ENCODE measurements at regions of chr1 and their contacts with region 1.

Region 1: GRCh38 chr1:212455803-212456528 is 23.2 kb downstream of the NENF start:
- DNase-seq: peak; percentile 83
- H3K4me3 ChIP-seq: no peak overlapping the region; a peak in 1 of 4 replicates
- H3K27ac ChIP-seq: no peak overlapping the region
- H3K4me1 ChIP-seq: peaks cover 0 to 14% of the 10 kb centered on the region in 2 experiments; a peak in 1 of 4 replicates
- H3K27me3 ChIP-seq: no peaks in the 10 kb centered on the region
- CTCF ChIP-seq: peak; percentile 97
- EP300 ChIP-seq: no peak
- RAD21 ChIP-seq: peak; percentile 98

Region 2: GRCh38 chr1:211680752-211681327 is 775.1 kb before region 1 on chr1:
- CTCF ChIA-PET with region 1: interaction called, 18 read pairs
- POLR2A ChIA-PET with region 1: no interaction called
- DNase-seq: peak; percentile 83
- H3K4me3 ChIP-seq: no peak overlapping the region
- H3K27ac ChIP-seq: peak overlapping the region in 1 of 2 experiments; percentile 36; a peak in 1 of 4 replicates
- H3K4me1 ChIP-seq: peaks cover 0 to 2% of the 10 kb centered on the region in 2 experiments; a peak in 3 of 4 replicates
- H3K27me3 ChIP-seq: no peaks in the 10 kb centered on the region
- CTCF ChIP-seq: peak; percentile 74
- EP300 ChIP-seq: no peak
- RAD21 ChIP-seq: peak; percentile 95

Region 3: DNA sequence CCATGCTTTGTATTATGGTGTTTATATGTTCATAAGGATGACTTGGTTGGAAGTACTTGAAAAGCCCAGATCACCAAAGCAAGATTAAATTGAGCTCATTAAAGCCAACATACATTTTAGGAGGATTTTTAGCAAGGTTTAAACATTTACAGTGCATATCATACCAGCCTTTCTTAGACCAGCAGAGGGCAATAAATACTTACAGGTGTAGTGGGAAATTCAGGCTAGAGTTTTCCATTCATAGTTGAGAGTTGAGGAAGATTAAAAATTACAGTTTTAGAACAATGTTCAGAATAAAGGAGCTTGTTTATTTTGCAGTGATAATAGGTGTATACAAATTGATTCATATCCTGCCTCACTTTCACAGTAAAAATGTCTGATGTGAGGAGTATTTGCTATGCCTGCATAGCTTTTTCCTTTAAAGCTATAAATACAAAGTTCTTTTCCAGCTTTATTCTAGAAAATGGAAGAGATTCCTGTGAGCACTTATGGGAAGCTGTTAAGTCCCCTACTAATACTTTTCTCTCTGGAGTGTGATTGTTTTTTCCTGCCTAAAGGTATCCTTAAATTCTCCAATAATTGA is 385.2 kb before region 1 on chr1:
- CTCF ChIA-PET with region 1: interaction called, 187 read pairs
- POLR2A ChIA-PET with region 1: no interaction called
- DNase-seq: peak; percentile 15
- H3K4me3 ChIP-seq: no peak overlapping the region; a peak in 1 of 4 replicates
- H3K27ac ChIP-seq: no peak overlapping the region
- H3K4me1 ChIP-seq: no peaks in the 10 kb centered on the region
- H3K27me3 ChIP-seq: no peaks in the 10 kb centered on the region
- CTCF ChIP-seq: peak; percentile 85
- EP300 ChIP-seq: no peak
- RAD21 ChIP-seq: peak; percentile 89

Region 4: DNA sequence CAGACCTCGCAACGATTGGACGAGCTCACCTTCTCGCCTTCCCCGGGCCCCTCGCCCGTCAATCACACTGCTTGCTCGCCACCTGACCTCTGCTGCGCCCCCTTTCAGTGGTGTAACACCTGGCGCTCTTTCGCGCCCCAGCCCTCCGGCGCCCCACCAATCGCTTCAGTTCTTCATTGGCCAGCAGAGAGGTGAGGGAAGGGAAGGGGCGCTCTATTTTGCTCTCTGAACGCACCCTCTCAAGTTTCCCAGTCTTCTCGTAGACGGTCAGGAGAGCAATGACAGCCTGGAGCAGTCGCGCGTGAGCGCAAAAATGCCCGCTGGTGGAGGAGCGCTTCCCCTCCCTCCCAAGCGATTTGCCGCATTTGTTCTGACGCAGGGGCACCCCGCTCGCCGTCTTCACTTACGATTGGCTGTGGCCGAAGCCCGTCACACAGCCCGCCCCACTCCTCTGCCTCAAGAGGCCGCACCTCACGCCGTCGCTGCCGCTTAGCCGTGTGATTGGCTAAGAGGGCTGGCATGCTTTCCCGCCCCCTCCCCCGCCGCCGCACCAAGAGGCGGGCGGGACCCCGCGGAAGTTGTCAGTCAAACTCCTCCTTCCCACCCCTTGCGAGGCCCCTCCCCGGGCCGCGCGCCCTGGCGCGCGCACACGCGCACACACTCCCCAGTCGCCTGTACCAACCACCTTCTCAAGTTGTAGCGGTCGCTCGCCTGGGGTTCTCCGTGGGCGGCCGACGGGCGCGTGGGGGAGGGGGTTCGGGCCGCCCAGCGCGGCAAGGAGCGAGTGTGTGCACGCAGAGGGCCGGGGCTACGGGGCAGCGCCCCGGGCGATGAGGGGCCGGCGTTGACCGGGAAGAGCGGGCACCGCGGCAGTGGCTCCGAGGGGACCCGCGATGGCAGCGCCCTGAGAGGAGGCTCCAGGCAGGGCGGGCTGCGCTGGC is 171.0 kb before region 1 on chr1 and contains the start of gene PPP2R5A:
- CTCF ChIA-PET with region 1: interaction called, 24 read pairs
- POLR2A ChIA-PET with region 1: no interaction called
- DNase-seq: peak; percentile 98
- H3K4me3 ChIP-seq: peak within 1 kb of the TSS; percentile 96
- H3K27ac ChIP-seq: peak within 1 kb of the TSS; percentile 77 to 89
- H3K4me1 ChIP-seq: peaks cover 12 to 18% of the 10 kb centered on the region in 2 experiments; a peak in 3 of 4 replicates
- H3K27me3 ChIP-seq: no peaks in the 10 kb centered on the region
- CTCF ChIP-seq: peak; percentile 46
- EP300 ChIP-seq: peak in 1 of 2 experiments; percentile 40; a peak in 1 of 4 replicates
- RAD21 ChIP-seq: no peak
- polyA plus RNA-seq, gene PPP2R5A: 5.4 and 6.1 TPM in 2 replicates

Region 5: GRCh38 chr1:212368073-212368484 is 87.9 kb before region 1 on chr1:
- CTCF ChIA-PET with region 1: interaction called, 14 read pairs
- POLR2A ChIA-PET with region 1: no interaction called
- DNase-seq: peak; percentile 60
- H3K4me3 ChIP-seq: no peak overlapping the region
- H3K27ac ChIP-seq: no peak overlapping the region
- H3K4me1 ChIP-seq: no peaks in the 10 kb centered on the region
- H3K27me3 ChIP-seq: no peaks in the 10 kb centered on the region
- CTCF ChIP-seq: peak; percentile 87
- EP300 ChIP-seq: no peak
- RAD21 ChIP-seq: peak; percentile 82

Region 6: DNA sequence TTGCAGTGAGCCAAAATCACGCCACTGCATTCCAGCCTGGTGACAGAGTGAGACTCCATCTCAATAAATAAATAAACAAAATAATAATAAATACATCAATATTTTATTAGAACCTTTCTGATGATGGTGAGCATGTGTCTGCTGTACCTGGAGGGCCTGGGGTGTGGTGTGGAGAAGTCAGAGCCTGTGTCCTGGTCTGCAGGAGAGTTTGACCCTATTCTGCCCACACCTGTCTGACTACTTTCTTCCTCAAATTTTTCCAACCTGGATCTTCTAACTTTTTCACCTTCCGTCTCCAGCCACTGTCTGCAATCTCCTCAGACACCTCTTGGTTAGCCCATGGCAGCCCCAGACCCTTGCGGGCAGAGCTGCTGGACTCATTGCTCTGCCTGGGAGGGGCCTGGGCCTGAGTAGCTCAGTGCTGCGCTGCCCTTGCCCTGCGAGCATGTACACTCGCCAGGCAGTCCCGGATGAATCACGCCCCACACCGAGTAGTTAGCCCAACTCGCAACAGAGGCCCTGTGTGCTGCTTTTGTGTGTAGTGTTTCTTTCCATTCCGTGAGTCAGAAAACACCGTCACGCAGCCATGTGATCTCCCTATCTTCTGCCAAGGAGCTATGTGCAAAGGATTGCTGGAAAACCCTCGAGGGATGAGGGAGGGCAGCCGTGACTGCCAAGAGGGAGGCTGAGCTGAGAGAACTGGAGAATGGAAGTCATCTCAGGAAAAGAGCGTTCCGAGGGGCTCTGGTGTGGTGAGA is 13.9 kb after region 1 on chr1:
- CTCF ChIA-PET with region 1: interaction called, 72 read pairs
- POLR2A ChIA-PET with region 1: no interaction called
- DNase-seq: no peak
- H3K4me3 ChIP-seq: no peak overlapping the region
- H3K27ac ChIP-seq: peak overlapping the region in 1 of 2 experiments; percentile 44; a peak in 1 of 4 replicates
- H3K4me1 ChIP-seq: no peaks in the 10 kb centered on the region
- H3K27me3 ChIP-seq: no peaks in the 10 kb centered on the region
- CTCF ChIP-seq: no peak
- EP300 ChIP-seq: peak in 1 of 2 experiments; percentile 33; a peak in 1 of 4 replicates
- RAD21 ChIP-seq: no peak

Region 7: GRCh38 chr1:212503714-212504113 is 47.7 kb after region 1 on chr1:
- CTCF ChIA-PET with region 1: no interaction called
- POLR2A ChIA-PET with region 1: no interaction called
- DNase-seq: no peak
- H3K4me3 ChIP-seq: no peak overlapping the region
- H3K27ac ChIP-seq: no peak overlapping the region
- H3K4me1 ChIP-seq: no peaks in the 10 kb centered on the region
- H3K27me3 ChIP-seq: no peaks in the 10 kb centered on the region
- CTCF ChIP-seq: no peak
- EP300 ChIP-seq: no peak
- RAD21 ChIP-seq: no peak

Measured in SK-N-SH (cell line).